ENCODE measurements at regions of chr20 and their contacts with region 1.

Region 1: GRCh38 chr20:59515014-59515905 is 89.1 kb upstream of the PHACTR3 start:
- DNase-seq: no peak
- H3K4me3 Mint-ChIP-seq: no peak overlapping the region
- H3K27ac Mint-ChIP-seq: no peak overlapping the region
- H3K4me1 Mint-ChIP-seq: no peaks in the 10 kb centered on the region
- H3K27me3 Mint-ChIP-seq: peaks cover 22% of the 10 kb centered on the region

Region 2: DNA sequence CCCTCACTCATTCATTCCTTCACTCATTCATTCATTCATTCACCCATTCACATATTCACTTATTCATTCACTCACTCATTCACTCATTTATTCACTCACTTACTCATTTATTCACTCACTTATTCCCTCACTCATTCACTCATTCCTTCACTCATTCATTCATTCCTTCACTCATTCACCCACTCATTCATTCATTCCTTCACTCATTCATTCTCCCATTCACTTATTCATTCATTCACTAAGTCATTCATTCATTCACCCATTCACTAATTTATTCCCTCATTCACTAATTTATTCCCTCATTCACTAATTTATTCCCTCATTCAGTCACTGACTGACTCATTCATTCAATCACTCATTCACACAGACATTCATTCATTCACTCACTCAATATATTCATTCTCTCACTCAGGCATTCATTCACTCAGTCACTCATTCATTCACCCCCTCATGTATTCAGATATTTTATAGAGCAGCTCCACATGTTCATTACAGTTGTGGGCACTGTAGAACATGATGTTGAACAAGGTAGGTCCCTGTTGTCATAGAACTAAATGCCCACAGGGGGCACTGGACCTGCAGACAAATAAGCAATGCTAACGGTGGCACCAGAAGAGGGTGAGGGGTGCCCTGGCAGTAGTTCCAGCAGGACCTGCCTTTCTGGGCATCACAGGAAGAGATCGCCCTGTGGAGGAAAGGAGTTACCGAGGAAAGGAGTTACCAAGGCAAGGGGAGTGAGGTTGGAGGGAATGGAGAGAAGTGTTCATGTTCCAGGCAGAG is 87.0 kb before region 1 on chr20:
- intact Hi-C with region 1: no loop called
- DNase-seq: no peak
- H3K4me3 Mint-ChIP-seq: no peak overlapping the region
- H3K27ac Mint-ChIP-seq: no peak overlapping the region
- H3K4me1 Mint-ChIP-seq: peaks cover 8% of the 10 kb centered on the region
- H3K27me3 Mint-ChIP-seq: no peaks in the 10 kb centered on the region

Region 3: GRCh38 chr20:59493926-59494325 is 21.3 kb before region 1 on chr20:
- intact Hi-C with region 1: loop called (anchors 1 kb)
- DNase-seq: no peak
- H3K4me3 Mint-ChIP-seq: no peak overlapping the region
- H3K27ac Mint-ChIP-seq: no peak overlapping the region
- H3K4me1 Mint-ChIP-seq: no peaks in the 10 kb centered on the region
- H3K27me3 Mint-ChIP-seq: peaks cover 4% of the 10 kb centered on the region